ENCODE measurements at regions of chr2 and their contacts with region 1.

Region 1: DNA sequence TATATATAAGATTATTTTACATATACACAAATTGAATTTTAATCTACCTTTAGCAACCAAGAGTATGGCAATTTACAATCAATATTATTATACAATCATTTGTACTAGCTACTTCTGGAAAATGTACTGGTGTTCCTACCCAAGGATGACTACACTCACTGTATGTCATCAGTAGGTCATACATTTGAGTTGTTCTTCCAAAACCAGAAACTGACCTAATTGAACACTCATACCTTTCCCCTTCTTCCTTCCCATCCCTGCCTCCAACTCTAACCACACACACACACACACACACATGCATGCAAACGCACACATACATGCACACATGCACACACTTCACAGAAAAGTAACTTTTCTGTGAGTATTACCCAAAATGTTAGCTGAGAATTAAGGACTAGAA is 8.2 kb upstream of the ERCC3 start:
- DNase-seq: no peak
- ATAC-seq: no peak
- H3K4me3 ChIP-seq: no peak overlapping the region
- H3K27ac ChIP-seq: no peak overlapping the region
- H3K4me1 ChIP-seq: peaks cover 6% of the 10 kb centered on the region; the same call in 1 of the 2 replicates
- H3K27me3 ChIP-seq: no peaks in the 10 kb centered on the region
- CTCF ChIP-seq: no peak
- EP300 ChIP-seq: no peak
- POLR2A ChIP-seq: no peak
- RAD21 ChIP-seq: no peak

Region 2: DNA sequence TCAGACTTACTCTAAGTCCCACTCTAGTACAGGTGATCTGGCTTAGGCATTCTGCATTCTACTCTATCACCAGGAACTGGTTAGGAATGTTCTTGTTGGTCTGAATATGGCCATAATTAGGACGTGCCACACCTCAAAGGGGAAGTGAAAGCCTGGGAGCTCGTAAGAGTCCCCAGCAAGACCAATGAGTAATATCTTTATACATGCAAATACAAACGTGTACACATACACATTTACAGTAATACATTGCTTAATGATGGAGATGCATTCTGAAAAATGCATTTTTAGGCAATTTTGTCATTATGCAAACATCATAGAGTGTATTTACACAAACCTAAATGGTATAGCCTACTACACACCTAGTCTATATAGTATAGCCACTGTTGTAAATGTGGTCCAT is 11.2 kb after region 1 on chr2:
- CTCF ChIA-PET with region 1: interaction called, 5 read pairs
- POLR2A ChIA-PET with region 1: interaction called, 3 read pairs
- RAD21 ChIA-PET with region 1: no interaction called
- SMC1A ChIA-PET with region 1: interaction called, 12 read pairs
- in situ Hi-C with region 1: no loop called
- intact Hi-C with region 1: no loop called
- DNase-seq: peak; percentile 57
- ATAC-seq: peak; percentile 99
- H3K4me3 ChIP-seq: no peak overlapping the region
- H3K27ac ChIP-seq: no peak overlapping the region
- H3K4me1 ChIP-seq: peaks cover 18% of the 10 kb centered on the region
- H3K27me3 ChIP-seq: no peaks in the 10 kb centered on the region
- CTCF ChIP-seq: no peak
- EP300 ChIP-seq: peak; percentile 35 to 67; a peak in 3 of 4 replicates
- POLR2A ChIP-seq: no peak
- RAD21 ChIP-seq: no peak

Region 3: DNA sequence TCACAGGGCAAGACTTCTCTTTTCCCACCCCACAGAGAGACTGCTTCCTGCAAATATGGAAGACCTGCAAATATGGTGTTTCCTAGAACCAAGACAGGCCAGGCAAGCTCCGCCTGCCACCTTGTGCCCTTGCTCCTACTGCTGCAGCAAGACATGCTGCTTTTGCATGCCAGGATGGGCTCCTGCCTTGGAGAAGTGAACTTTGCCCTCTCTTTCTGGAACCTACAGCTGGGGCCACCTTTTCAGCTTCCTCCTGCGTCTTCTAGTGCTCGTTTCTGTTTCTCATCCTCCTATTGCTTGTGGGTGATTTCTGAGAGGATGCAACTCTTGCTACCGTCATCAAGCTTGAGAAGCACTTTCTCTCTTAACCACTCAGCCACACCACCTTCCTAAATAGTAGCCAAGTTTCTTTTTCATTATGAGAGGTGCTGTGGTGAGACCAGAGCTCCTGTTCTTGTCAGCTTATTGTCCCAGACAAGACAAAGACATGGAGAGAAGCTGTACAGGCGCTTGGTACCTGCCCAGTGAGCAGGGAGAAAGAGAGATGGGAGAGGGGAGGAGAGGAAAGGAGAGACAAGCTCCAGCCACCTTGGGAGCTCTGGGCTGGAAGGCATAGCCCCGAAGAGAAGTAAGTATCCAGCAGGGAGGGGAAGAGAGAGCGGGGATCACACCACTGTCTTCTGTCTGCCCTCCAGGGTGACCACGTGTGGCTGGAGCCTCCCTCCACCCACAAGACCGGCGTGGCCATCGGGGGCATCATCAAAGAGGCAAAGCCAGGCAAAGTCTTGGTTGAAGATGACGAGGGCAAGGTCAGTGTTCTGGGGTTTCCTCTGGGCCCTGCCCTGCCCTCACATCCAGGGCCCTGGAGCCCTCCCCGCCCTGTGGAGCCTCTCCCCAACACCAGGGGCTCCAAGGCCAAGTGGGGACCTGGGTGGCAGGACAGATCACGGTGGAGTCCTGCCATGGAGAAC is 261.6 kb after region 1 on chr2:
- CTCF ChIA-PET with region 1: no interaction called
- POLR2A ChIA-PET with region 1: no interaction called
- RAD21 ChIA-PET with region 1: no interaction called
- SMC1A ChIA-PET with region 1: no interaction called
- in situ Hi-C with region 1: no loop called
- intact Hi-C with region 1: no loop called
- DNase-seq: peak; percentile 92
- ATAC-seq: peak; percentile 92
- H3K4me3 ChIP-seq: peak overlapping the region; percentile 54
- H3K27ac ChIP-seq: peak overlapping the region; percentile 70
- H3K4me1 ChIP-seq: peaks cover 17% of the 10 kb centered on the region
- H3K27me3 ChIP-seq: 0 out of 4 replicates have a peak, but pooled peaks cover 0 to 4% of the 10 kb centered on the region in 2 experiments
- CTCF ChIP-seq: no peak
- EP300 ChIP-seq: peak; percentile 86 to 95
- POLR2A ChIP-seq: no peak
- RAD21 ChIP-seq: no peak

Measured in GM12878 (cell line).